Ascending aorta (tissue), 2 donors: ENCODE measurements at regions of chr19 and their contacts with region 1.

Region 1: DNA sequence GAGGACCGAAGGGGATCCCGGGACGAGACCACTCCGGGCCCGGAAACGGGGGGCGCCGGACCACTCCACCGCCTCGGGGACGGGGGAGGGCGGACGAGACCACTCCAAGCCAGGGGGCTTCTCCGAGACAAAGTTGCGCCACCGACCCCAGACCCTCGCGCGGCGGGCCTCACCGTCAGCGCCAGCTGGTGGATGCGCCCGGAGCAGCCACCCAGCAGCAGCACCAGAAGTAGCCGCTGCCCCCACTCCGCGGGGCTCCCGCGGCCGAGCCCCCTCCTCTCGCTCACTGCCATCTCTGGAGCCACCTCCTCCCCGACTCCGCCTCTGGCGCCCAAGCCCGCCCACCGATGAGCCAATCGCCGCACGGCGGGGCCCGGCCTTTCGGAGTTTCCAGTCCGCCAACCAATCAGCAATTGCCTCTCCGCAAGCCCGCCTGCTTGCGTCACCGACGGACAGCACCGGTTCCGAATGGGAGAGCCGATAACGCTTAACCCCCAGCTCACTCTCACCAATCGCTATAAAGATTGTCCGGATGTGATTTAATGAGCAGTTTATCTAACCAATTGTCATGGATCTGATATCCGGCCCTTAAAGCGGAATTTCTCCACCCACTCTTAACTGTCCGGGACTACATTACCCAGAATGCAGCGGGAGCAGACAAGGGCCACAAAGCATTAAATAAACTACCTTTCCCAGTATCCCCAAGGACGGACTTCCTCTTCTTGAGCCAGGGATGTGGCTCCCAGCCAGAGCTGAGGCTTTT is at the start of gene GPR108:
- DNase-seq: peak; percentile 99 to 100
- H3K4me3 ChIP-seq: peak within 1 kb of the TSS; percentile 72 to 87
- H3K27ac ChIP-seq: peak within 1 kb of the TSS; percentile 86 to 97
- H3K4me1 ChIP-seq: peaks cover 3 to 30% of the 10 kb centered on the region in 2 donors
- H3K27me3 ChIP-seq: no peaks in the 10 kb centered on the region
- CTCF ChIP-seq: no peak
- total RNA-seq, gene GPR108: 57.6 TPM

Region 2: DNA sequence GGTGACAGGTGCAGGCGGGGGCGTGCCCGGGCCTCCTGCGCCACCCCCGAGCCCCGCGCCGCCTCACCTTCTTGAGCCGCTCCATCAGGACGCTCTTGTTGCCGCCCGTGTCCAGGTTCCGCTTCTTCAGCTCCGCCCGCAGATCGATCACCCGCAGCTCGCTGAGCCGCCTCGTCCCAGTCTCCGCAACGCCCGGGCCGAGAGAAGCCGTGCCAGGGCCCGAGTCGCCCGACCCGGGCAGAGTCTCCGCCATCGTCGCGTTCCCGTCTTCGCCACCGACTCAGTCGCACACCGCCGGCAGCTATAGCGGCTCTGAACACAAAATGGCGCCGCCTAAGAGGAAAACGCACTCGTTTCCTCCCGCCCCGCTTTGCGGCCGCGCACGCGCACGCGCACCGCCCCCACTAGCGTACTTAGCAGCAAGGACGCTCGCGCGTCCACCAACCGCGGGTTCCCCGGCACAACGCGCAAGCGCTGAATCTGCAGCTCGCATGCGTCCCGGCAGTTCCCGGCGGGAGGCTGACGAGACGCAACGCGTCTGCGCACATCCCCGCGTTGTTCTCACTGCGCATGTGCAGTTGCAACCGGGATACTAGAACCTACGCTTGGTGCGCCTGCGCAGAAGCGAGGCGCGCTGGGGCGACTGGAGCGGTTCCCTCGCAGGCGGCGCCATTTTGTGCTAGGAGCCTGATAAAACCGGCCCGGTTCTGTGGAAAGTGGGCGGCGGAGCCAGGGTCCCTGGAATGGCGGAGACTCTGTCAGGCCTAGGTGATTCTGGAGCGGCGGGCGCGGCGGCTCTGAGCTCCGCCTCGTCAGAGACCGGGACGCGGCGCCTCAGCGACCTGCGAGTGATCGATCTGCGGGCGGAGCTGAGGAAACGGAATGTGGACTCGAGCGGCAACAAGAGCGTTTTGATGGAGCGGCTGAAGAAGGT is 1114.7 kb before region 1 on chr19 and contains the starts of genes SAFB and SAFB2:
- intact Hi-C with region 1: loop called (anchors 10 kb)
- DNase-seq: peak; percentile 97 to 100
- H3K4me3 ChIP-seq: peak within 1 kb of the TSS; percentile 86 to 96
- H3K27ac ChIP-seq: peak within 1 kb of the TSS; percentile 93 to 97
- H3K4me1 ChIP-seq: peaks cover 3 to 49% of the 10 kb centered on the region in 2 donors
- H3K27me3 ChIP-seq: no peaks in the 10 kb centered on the region
- CTCF ChIP-seq: peak in 2 of 3 experiments; percentile 6 to 9
- total RNA-seq, gene SAFB: 114 TPM
- total RNA-seq, gene SAFB2: 10.7 TPM

Region 3: DNA sequence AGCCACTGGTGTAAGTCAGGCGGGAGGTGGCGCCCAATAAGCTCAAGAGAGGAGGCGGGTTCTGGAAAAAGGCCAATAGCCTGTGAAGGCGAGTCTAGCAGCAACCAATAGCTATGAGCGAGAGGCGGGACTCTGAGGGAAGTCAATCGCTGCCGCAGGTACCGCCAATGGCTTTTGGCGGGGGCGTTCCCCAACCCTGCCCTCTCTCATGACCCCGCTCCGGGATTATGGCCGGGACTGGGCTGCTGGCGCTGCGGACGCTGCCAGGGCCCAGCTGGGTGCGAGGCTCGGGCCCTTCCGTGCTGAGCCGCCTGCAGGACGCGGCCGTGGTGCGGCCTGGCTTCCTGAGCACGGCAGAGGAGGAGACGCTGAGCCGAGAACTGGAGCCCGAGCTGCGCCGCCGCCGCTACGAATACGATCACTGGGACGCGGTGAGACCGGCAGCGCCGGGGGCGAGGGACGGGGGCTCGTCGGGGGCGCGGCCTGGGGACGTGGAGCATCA is 364.8 kb before region 1 on chr19 and contains the start of gene ALKBH7:
- intact Hi-C with region 1: loop called (anchors 1 kb)
- DNase-seq: peak; percentile 98 to 100
- H3K4me3 ChIP-seq: peak within 1 kb of the TSS; percentile 75 to 88
- H3K27ac ChIP-seq: peak within 1 kb of the TSS; percentile 93 to 99
- H3K4me1 ChIP-seq: peaks cover 3 to 5% of the 10 kb centered on the region in 2 donors
- H3K27me3 ChIP-seq: no peaks in the 10 kb centered on the region
- CTCF ChIP-seq: no peak
- total RNA-seq, gene ALKBH7: 68.8 TPM

Region 4: DNA sequence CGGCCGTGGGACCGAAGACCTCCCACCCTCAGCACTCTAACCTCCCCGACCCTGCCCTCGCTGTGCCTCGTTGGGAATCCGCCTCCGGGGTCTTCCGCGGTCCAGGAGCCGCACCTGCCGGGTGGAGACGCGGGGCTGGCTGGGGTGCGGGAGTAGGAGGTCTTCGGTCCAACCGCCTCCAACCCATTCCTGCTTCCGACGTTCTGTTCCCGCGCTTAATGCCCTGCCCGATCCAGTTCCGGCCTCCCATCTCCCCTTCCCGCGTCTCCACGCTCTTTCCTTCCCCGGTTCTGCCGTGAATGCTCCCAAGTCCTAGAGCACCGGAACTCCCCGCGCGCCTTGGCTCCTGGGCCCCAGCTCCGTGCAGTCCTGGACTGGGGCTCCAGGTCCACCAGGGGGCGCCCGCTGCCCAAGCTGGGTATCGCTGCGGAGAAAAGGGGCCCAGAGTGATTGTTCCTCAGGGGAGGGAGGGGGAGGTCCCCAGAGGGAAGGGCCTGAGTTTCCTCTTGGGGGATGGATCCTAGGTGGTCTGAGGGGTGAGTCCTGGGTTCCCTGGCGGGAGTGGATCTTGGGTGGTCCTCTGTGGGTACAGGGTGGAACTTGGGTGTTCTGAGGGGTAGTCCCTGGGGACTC is 220.7 kb before region 1 on chr19:
- intact Hi-C with region 1: loop called (anchors 5 kb)
- DNase-seq: peak; percentile 31 to 90
- H3K4me3 ChIP-seq: peak overlapping the region; percentile 46 to 73
- H3K27ac ChIP-seq: peak overlapping the region in 1 of 2 donors; percentile 53
- H3K4me1 ChIP-seq: peaks cover 0 to 4% of the 10 kb centered on the region in 2 donors
- H3K27me3 ChIP-seq: no peaks in the 10 kb centered on the region
- CTCF ChIP-seq: peak; percentile 85 to 98 (median 91)

Region 5: DNA sequence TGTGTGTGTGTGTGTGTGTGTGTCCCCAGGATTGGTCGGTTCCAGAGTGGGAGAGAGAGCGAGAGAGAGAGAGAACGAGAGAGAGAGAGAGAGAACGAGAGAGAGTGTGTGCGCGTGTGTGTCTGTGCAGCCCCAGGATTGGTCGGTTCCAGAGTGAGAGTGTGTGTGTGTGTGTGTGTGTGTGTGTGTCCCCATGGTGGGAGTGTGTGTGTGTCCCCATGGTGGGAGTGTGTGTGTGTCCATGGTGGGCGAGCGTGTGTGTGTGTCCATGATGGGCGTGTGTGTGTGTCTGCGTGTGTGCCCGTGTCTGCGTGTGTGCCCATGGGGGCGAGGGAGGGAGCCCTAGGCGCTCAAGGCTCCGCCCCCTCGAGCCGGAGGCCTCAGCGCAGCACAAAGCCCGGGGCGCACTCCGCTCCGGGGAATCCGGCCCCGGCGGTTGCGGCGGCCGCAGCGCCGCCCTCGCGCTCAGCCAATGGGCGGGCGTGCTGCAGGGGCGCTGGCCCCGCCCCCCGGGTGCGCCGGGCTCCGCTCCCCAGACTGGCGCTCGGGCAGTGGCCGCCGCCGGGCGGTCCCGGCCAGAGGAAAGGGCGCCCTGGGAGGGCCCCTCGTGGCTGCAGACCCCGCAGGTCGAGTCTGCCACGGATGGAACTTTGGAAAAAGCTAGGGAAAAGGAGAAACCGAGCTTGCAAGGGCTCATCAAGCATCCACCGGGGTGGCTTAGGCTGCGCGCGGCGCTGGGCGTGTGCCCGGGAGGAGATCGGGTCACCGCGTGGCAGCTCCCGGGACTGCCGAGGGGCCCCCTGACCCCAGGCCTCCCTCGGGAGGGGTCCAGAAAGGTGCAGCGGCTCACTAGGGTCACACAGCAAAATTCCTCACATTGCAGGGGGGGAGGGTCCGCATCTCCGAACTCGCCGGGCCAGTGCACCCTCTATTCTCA is 460.6 kb after region 1 on chr19:
- intact Hi-C with region 1: loop called (anchors 5 kb)
- DNase-seq: peak; percentile 77 to 96
- H3K4me3 ChIP-seq: peak overlapping the region; percentile 81 to 83
- H3K27ac ChIP-seq: peak overlapping the region; percentile 93 to 94
- H3K4me1 ChIP-seq: peaks cover 4 to 9% of the 10 kb centered on the region in 2 donors
- H3K27me3 ChIP-seq: no peaks in the 10 kb centered on the region
- CTCF ChIP-seq: peak; percentile 12 to 40 (median 32)

Region 6: GRCh38 chr19:7829561-7830271 is 1092.3 kb after region 1 on chr19 and contains the start of gene EVI5L:
- intact Hi-C with region 1: loop called (anchors 10 kb)
- DNase-seq: peak; percentile 99
- H3K4me3 ChIP-seq: peak within 1 kb of the TSS; percentile 69 to 98
- H3K27ac ChIP-seq: no peak within 1 kb of the TSS
- H3K4me1 ChIP-seq: peaks cover 3 to 9% of the 10 kb centered on the region in 2 donors
- H3K27me3 ChIP-seq: no peaks in the 10 kb centered on the region
- CTCF ChIP-seq: no peak
- total RNA-seq, gene EVI5L: 27.7 TPM